Activated B cell treated with CpG ODN at 0.5 μM for 24 hours (primary cell): ENCODE measurements at regions of chr20 and their contacts with region 1.

Region 1: DNA sequence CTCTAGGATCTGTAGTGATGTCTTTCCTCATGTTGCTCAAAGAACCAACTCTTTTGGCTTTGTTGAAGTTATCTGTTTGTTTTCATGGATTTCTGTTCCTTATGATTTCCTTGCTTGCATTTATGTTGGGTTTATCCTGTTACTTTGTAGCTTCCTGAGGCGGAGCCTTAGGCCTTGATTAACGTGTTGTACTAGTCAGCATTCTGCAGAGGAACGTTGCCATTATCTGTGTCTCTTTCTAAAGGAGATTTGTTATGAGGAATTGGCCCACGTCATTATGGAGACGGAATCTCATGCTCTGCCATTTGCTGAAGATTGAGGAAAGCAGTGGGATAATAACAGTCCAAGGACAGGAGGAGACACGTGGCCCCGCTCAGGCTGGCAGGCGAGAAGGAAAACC is 29.9 kb downstream of the UCKL1 start:
- DNase-seq: no peak
- ATAC-seq: no peak
- H3K4me3 Mint-ChIP-seq: no peak overlapping the region
- H3K27ac Mint-ChIP-seq: no peak overlapping the region
- H3K4me1 Mint-ChIP-seq: no peaks in the 10 kb centered on the region
- H3K27me3 Mint-ChIP-seq: no peaks in the 10 kb centered on the region
- CTCF ChIP-seq: no peak

Region 2: DNA sequence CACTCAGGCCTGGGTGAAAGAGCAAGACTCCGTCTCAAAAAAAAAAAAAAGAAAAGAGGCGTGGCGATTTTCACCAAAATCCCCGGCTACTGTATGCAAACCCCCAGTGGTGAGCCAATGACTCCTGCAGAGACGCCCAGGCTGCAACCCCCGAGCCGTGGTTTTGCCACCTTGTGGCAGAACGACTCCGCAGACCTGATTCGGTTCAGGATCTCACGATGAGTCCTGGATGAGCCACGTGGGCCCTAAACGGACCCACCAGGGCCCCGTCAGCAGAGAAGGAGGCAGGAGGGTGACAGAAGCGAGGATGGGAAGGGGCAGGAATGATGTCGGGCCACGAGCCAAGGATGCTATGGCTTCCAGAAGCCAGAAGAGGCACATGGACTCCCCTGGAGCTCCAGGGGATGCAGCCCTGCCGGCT is 144.2 kb before region 1 on chr20:
- CTCF ChIA-PET with region 1: no interaction called
- POLR2A ChIA-PET with region 1: interaction called, 11 read pairs
- intact Hi-C with region 1: no loop called
- DNase-seq: no peak
- ATAC-seq: peak; percentile 33
- H3K4me3 Mint-ChIP-seq: no peak overlapping the region
- H3K27ac Mint-ChIP-seq: no peak overlapping the region
- H3K4me1 Mint-ChIP-seq: peaks cover 6% of the 10 kb centered on the region
- H3K27me3 Mint-ChIP-seq: no peaks in the 10 kb centered on the region
- CTCF ChIP-seq: no peak

Region 3: DNA sequence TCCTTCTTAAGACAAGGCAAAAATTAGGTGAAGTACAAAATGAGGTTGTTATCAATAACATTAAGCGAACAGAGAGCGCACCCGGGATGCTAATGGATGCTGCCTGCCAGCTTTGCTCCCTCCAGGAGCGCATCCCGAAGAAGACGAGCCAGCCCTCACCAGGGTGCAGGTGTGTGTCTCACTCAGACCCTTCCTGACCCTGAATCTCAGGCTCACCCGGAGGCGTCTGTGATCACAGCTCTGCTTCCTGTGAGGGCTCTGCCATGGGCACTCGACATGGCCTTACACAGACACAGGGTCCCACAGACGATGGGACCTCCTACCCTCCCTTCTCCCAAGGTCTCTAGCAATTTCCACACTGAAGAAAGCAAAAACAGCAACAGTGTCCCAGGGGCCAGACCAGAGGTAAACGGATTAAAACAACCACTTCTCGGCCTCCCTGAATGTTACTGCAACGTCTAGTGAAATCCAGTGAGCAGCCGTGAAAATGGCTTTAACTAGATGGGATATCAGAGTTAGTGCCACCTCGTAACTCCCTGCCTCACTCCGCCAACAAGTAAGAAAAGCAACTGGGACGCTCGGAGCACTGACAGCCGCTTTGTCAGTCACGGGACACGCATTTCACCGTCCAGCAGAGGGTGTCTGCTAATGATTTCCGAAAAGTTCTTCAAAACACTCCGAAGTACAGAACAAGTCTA is 106.9 kb before region 1 on chr20:
- CTCF ChIA-PET with region 1: no interaction called
- POLR2A ChIA-PET with region 1: no interaction called
- intact Hi-C with region 1: no loop called
- DNase-seq: no peak
- ATAC-seq: no peak
- H3K4me3 Mint-ChIP-seq: no peak overlapping the region
- H3K27ac Mint-ChIP-seq: no peak overlapping the region
- H3K4me1 Mint-ChIP-seq: no peaks in the 10 kb centered on the region
- H3K27me3 Mint-ChIP-seq: peaks cover 13% of the 10 kb centered on the region
- CTCF ChIP-seq: no peak

Region 4: DNA sequence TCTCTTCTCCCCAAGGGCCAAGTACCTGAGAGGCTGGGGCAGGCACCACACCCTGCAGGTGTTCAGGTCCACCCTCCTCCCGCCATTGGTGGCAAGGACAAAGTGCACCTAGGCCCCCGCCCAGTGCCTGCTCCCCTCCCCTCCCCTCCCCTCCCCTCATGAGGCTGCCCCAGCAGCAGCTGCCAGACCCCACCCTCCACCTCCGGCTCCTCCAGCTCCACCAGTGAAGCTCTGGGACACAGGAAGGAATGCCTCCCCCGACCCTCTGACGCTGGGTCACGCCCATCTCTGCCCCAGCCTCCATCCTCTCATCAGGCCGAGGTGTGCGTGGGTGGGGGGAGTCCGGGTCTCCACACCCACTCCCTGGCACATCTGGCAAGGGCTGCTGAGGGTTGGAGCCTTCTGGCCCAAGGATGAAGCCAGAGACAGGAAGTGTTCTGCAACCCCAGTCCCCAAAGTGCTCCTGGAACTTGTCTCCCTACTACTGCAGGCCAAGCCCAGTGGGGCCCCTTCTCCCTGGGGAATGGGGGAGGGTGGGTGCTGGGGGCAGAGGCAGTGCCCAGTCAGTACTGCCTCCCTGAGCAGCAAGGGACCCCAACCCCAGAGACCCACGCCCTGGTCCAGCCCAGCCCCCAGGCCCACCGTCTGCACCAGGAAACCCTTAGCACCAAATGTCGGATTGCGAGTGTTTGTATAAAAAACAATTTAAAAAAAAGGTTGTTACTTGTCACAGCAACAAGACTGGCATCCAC is 31.6 kb after region 1 on chr20:
- CTCF ChIA-PET with region 1: no interaction called
- POLR2A ChIA-PET with region 1: no interaction called
- intact Hi-C with region 1: no loop called
- DNase-seq: no peak
- ATAC-seq: no peak
- H3K4me3 Mint-ChIP-seq: no peak overlapping the region
- H3K27ac Mint-ChIP-seq: peak overlapping the region; percentile 79
- H3K4me1 Mint-ChIP-seq: peaks cover 34% of the 10 kb centered on the region
- H3K27me3 Mint-ChIP-seq: no peaks in the 10 kb centered on the region
- CTCF ChIP-seq: no peak

Region 5: GRCh38 chr20:64037498-64038213 is 111.4 kb after region 1 on chr20:
- CTCF ChIA-PET with region 1: no interaction called
- POLR2A ChIA-PET with region 1: no interaction called
- intact Hi-C with region 1: no loop called
- DNase-seq: no peak
- ATAC-seq: no peak
- H3K4me3 Mint-ChIP-seq: peak overlapping the region; percentile 60
- H3K27ac Mint-ChIP-seq: no peak overlapping the region
- H3K4me1 Mint-ChIP-seq: peaks cover 17% of the 10 kb centered on the region
- H3K27me3 Mint-ChIP-seq: peaks cover 9% of the 10 kb centered on the region
- CTCF ChIP-seq: no peak